ENCODE measurements at regions of chr2 and their contacts with region 1.

Region 1: GRCh38 chr2:72887754-72888437 is 688 bp downstream of the SPR start:
- DNase-seq: peak; percentile 83
- H3K4me3 ChIP-seq: peak overlapping the region; percentile 66 to 79 (median 75)
- H3K27ac ChIP-seq: no peak overlapping the region
- H3K4me1 ChIP-seq: peaks cover 13% of the 10 kb centered on the region
- H3K27me3 ChIP-seq: no peaks in the 10 kb centered on the region
- CTCF ChIP-seq: peak; percentile 95 to 97

Region 2: DNA sequence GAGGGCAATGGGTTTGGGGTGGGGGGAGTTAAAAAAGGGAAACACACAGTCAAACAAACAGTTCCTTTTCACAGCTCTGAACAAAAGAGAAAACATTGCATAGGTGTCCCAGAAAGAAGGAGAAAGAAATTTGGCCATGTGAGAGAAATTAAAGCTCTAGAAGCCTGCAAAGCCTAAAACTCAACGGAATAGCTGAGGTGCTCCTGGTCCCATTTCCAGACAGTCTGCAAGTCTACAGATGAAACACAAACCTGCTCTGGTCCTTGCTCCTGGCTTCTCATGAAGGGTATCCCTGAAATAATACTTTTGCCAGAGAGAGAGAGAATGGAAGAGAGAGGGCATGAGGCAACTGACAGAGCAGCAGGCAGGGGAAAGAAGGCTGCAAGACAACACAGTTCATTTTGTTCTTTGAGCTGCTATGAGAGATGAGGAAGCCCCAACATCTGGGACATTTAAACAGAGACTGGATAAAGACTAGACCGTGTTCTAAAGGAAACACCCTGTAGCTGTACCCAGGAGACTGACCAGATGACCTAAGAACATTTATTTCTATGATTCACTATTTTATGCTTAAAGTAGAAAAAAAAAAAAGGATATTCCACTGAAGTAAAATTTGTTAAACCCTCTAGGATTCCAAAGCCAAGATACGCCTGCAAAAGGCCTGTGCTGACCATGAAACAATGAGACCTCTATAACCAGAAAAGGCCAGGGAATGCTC is 683.0 kb before region 1 on chr2:
- CTCF ChIA-PET with region 1: no interaction called
- dilution Hi-C with region 1: no loop called
- in situ Hi-C with region 1: no loop called
- intact Hi-C with region 1: no loop called
- DNase-seq: no peak
- H3K4me3 ChIP-seq: no peak overlapping the region
- H3K27ac ChIP-seq: no peak overlapping the region
- H3K4me1 ChIP-seq: peaks cover 8% of the 10 kb centered on the region
- H3K27me3 ChIP-seq: no peaks in the 10 kb centered on the region
- CTCF ChIP-seq: no peak

Region 3: GRCh38 chr2:72694715-72695496 is 193.0 kb before region 1 on chr2:
- CTCF ChIA-PET with region 1: no interaction called
- dilution Hi-C with region 1: no loop called
- in situ Hi-C with region 1: no loop called
- intact Hi-C with region 1: no loop called
- DNase-seq: no peak
- H3K4me3 ChIP-seq: no peak overlapping the region
- H3K27ac ChIP-seq: no peak overlapping the region
- H3K4me1 ChIP-seq: peaks cover under 1% of the 10 kb centered on the region
- H3K27me3 ChIP-seq: no peaks in the 10 kb centered on the region
- CTCF ChIP-seq: no peak

Region 4: GRCh38 chr2:72862239-72862988 is 25.5 kb before region 1 on chr2:
- CTCF ChIA-PET with region 1: no interaction called
- dilution Hi-C with region 1: no loop called
- in situ Hi-C with region 1: no loop called
- intact Hi-C with region 1: loop called (anchors 2 kb)
- DNase-seq: peak; percentile 84
- H3K4me3 ChIP-seq: peak overlapping the region in 2 of 3 experiments; percentile 13 to 33
- H3K27ac ChIP-seq: no peak overlapping the region
- H3K4me1 ChIP-seq: peaks cover 18% of the 10 kb centered on the region
- H3K27me3 ChIP-seq: no peaks in the 10 kb centered on the region
- CTCF ChIP-seq: peak; percentile 97 to 99

Region 5: GRCh38 chr2:72973566-72974435 is 85.9 kb after region 1 on chr2:
- CTCF ChIA-PET with region 1: interaction called, 31 read pairs
- dilution Hi-C with region 1: no loop called
- in situ Hi-C with region 1: loop called (anchors 5 kb)
- intact Hi-C with region 1: loop called (anchors 1 kb)
- DNase-seq: peak; percentile 32
- H3K4me3 ChIP-seq: no peak overlapping the region
- H3K27ac ChIP-seq: no peak overlapping the region
- H3K4me1 ChIP-seq: no peaks in the 10 kb centered on the region
- H3K27me3 ChIP-seq: no peaks in the 10 kb centered on the region
- CTCF ChIP-seq: peak; percentile 93 to 94

Region 6: GRCh38 chr2:73085691-73086360 is 197.9 kb after region 1 on chr2:
- CTCF ChIA-PET with region 1: no interaction called
- dilution Hi-C with region 1: no loop called
- in situ Hi-C with region 1: no loop called
- intact Hi-C with region 1: loop called (anchors 1 kb)
- DNase-seq: peak; percentile 48
- H3K4me3 ChIP-seq: no peak overlapping the region
- H3K27ac ChIP-seq: no peak overlapping the region
- H3K4me1 ChIP-seq: peaks cover 21% of the 10 kb centered on the region
- H3K27me3 ChIP-seq: no peaks in the 10 kb centered on the region
- CTCF ChIP-seq: peak; percentile 86 to 95

Region 7: DNA sequence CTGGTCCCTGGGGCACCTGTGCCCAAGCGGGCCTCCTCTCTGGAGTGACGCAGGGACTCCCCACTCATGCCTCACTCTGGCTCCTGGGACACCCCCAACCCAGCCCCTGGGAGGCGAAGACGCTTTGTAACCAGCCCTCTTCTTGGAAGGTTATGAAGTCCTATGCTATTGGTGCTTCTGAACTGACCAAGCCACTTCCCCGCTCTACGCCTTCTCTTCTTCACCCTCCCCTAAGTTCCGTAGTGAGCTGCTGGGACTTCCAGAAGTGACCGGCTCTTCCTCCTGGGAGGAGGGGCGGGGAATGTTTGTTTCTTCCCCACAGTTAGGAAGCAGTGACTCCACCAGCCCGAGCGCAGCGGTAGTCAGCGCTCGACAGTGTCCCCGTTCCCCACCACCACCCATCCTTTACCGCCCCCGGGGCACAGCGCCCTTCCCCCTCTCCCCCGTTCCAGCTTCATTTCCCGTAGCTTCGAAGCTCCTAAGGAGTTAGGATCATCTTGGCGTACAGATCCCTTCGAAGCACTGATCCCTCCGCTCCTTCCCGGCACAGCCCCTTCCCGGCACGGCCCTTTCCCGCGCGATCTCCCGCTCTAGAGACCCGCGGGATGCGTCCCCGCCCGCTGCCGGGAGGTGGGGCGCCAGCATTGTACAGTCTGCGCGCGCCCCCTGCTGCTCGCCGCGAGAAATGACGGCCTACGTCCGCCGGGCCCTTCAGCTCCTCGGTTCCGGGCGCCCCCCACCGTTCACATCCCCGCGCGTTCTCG is 289.2 kb after region 1 on chr2:
- CTCF ChIA-PET with region 1: interaction called, 10 read pairs
- dilution Hi-C with region 1: no loop called
- in situ Hi-C with region 1: loop called in 1 of 2 experiments (anchors 10 kb)
- intact Hi-C with region 1: loop called (anchors 1 kb)
- DNase-seq: peak; percentile 64
- H3K4me3 ChIP-seq: peak overlapping the region; percentile 55 to 59 (median 55)
- H3K27ac ChIP-seq: no peak overlapping the region
- H3K4me1 ChIP-seq: peaks cover 27% of the 10 kb centered on the region
- H3K27me3 ChIP-seq: peaks cover 13% of the 10 kb centered on the region
- CTCF ChIP-seq: peak; percentile 64 to 93